ENCODE measurements at regions of chr9 and their contacts with region 1.

Region 1: GRCh38 chr9:108282872-108283271 is 572.9 kb downstream of the ACTL7B start:
- DNase-seq: no peak
- ATAC-seq: no peak
- H3K4me3 ChIP-seq: no peak overlapping the region
- H3K27ac ChIP-seq: no peak overlapping the region
- H3K4me1 ChIP-seq: no peaks in the 10 kb centered on the region
- H3K27me3 ChIP-seq: no peaks in the 10 kb centered on the region
- CTCF ChIP-seq: peak in 2 of 9 donors; percentile 22 to 37

Region 2: GRCh38 chr9:107472581-107473340 is 810.1 kb before region 1 on chr9:
- intact Hi-C with region 1: loop called in 2 of 10 experiments (anchors 10 kb)
- DNase-seq: no peak
- ATAC-seq: no peak
- H3K4me3 ChIP-seq: no peak overlapping the region
- H3K27ac ChIP-seq: no peak overlapping the region
- H3K4me1 ChIP-seq: no peaks in the 10 kb centered on the region
- H3K27me3 ChIP-seq: no peaks in the 10 kb centered on the region
- CTCF ChIP-seq: no peak

Region 3: DNA sequence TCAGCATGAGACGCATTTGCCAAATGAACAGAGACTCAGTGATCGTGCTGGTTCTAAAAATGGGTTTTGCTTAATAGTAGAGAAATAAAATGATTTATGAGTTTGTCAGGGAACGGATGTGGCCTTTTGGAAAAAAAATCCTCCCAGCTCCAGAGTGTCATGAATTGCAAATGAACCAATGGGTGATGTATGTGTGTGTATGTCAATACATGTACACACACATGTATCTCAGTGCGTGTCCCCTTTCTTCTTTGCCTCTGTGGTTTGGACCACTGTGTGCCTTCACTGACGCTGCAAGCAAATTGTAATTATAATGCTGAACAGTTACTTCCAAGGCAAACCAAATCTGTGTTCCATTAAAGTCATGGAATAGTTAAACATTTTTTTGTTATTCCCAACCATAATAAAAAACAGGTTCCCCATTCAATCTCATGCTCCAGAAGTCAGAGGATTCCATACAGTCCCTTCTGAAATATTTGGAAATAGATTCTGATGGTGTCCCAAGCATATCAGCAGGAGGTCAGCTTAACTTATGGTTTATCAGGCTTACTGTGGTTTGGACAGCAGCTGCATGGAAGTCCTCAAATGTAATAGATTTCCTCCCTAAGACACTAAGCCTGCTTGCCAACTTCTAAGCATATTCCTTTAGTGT is 57.6 kb before region 1 on chr9:
- intact Hi-C with region 1: loop called in 1 of 10 experiments (anchors 10 kb)
- DNase-seq: no peak
- ATAC-seq: no peak
- H3K4me3 ChIP-seq: no peak overlapping the region
- H3K27ac ChIP-seq: no peak overlapping the region
- H3K4me1 ChIP-seq: no peaks in the 10 kb centered on the region
- H3K27me3 ChIP-seq: no peaks in the 10 kb centered on the region
- CTCF ChIP-seq: no peak

Region 4: GRCh38 chr9:108316630-108317029 is 33.8 kb after region 1 on chr9:
- intact Hi-C with region 1: no loop called
- DNase-seq: no peak
- ATAC-seq: no peak
- H3K4me3 ChIP-seq: no peak overlapping the region
- H3K27ac ChIP-seq: no peak overlapping the region
- H3K4me1 ChIP-seq: no peaks in the 10 kb centered on the region
- H3K27me3 ChIP-seq: no peaks in the 10 kb centered on the region
- CTCF ChIP-seq: no peak

Measured in heart right ventricle (tissue), 16 donors.